AG04449 (cell line): ENCODE measurements at regions of chr10 and their contacts with region 1.

Region 1: DNA sequence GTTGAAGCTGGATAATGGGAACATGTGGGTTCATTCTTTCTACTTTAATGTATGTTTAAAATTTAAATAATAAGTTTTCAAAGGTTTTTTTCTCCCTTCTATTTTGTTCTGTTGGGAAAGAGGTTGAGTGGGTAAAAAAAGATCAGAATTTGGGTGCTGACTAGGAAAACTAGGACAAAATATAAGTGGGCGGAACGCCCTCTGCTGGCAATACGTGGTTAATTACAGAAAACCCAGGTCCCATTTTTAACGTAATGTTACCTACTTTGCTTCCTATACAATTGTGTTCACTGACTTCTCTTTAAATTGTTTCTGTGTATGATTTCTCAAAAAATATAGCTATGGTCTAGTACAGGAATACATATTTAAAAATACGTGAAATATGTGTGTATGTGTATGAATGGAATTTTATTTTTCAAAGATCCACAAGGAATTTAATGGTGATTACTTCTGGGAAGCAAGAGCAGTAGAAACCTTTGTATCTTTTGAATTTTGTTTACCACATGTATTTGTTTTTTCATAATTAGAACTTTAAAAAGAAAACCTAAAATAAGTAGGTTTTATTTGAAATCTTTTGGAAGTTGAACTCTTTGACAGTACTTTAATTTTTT is 8.7 kb downstream of the ECD start:
- DNase-seq: no peak
- H3K4me3 ChIP-seq: no peak overlapping the region
- CTCF ChIP-seq: peak; percentile 50

Region 2: GRCh38 chr10:72364239-72364777 is 794.8 kb before region 1 on chr10:
- CTCF ChIA-PET with region 1: interaction called, 14 read pairs
- POLR2A ChIA-PET with region 1: no interaction called
- DNase-seq: peak; percentile 80
- H3K4me3 ChIP-seq: peak overlapping the region; percentile 12; the same call in 1 of the 2 replicates
- CTCF ChIP-seq: peak; percentile 92

Region 3: GRCh38 chr10:72875250-72876055 is 283.7 kb before region 1 on chr10:
- CTCF ChIA-PET with region 1: no interaction called
- POLR2A ChIA-PET with region 1: no interaction called
- DNase-seq: no peak
- H3K4me3 ChIP-seq: no peak overlapping the region
- CTCF ChIP-seq: peak; percentile 24

Region 4: DNA sequence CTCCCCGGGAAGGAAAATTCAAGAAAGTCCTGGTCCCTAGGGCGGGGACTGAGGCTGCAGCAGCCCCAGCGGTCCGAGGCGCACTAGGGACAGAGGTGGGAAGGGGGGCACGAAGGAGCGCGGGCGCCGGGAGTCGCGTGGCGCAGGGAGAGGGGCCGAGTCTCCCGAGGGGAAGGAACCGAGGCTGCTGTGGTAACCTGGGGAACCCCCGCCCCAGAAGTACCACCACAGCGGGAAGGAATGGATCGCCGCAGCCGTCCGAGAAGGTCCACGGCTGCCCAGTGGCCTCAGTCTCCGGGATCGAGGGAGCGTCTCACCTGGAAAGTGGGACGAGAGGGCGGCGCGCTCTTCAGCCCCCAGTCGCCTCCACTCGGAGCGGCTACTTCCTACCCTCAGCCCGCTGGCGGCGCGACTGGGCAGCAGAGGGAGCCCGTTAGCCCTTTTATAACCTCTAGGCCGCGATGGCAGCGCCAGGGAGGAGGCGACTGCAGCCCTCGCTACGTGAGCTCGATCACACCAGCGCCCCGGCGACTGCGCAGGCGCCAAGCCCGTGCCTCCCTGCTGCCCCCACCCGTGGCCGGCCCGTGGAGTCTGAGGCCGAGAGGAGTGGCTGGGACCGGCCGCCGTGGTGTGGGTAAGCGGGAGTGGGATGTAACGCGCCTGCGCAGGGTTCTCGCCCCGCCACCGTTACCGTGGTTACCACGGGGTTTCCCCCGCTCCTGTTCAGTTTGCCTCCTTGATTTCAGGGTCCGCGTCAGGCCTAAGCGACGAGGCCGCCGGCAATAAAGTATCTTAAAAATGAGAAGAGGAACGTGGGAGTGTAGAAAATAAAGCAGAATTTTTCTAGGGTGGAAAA is 62.5 kb before region 1 on chr10 and contains the start of gene P4HA1:
- CTCF ChIA-PET with region 1: interaction called, 27 read pairs
- POLR2A ChIA-PET with region 1: interaction called, 3 read pairs
- DNase-seq: peak; percentile 77
- H3K4me3 ChIP-seq: peak within 1 kb of the TSS; percentile 98
- CTCF ChIP-seq: peak; percentile 72

Region 5: GRCh38 chr10:73131301-73131700 is 27.8 kb before region 1 on chr10:
- CTCF ChIA-PET with region 1: interaction called, 48 read pairs
- POLR2A ChIA-PET with region 1: no interaction called
- DNase-seq: no peak
- H3K4me3 ChIP-seq: no peak overlapping the region
- CTCF ChIP-seq: no peak

Region 6: DNA sequence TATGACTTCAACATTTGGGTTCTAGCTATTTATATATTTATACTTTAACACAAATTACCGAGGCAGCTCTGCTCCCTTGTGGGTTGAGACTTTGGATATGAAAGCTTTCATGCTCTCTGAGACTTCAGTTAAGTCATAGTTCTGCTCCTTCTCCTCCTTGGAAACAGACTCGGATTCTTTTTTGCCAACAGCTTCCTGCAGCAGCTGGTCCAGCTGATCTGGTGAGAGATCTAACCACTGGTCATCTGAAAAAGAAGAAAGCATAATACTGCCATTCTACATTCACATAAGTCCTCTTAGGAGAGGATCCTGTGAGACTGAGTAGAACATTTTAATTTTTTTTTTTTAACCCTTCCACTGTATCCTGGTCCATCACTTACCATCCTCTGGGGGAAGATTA is 19.9 kb before region 1 on chr10:
- CTCF ChIA-PET with region 1: interaction called, 48 read pairs
- POLR2A ChIA-PET with region 1: no interaction called
- DNase-seq: no peak
- H3K4me3 ChIP-seq: no peak overlapping the region
- CTCF ChIP-seq: no peak

Region 7: DNA sequence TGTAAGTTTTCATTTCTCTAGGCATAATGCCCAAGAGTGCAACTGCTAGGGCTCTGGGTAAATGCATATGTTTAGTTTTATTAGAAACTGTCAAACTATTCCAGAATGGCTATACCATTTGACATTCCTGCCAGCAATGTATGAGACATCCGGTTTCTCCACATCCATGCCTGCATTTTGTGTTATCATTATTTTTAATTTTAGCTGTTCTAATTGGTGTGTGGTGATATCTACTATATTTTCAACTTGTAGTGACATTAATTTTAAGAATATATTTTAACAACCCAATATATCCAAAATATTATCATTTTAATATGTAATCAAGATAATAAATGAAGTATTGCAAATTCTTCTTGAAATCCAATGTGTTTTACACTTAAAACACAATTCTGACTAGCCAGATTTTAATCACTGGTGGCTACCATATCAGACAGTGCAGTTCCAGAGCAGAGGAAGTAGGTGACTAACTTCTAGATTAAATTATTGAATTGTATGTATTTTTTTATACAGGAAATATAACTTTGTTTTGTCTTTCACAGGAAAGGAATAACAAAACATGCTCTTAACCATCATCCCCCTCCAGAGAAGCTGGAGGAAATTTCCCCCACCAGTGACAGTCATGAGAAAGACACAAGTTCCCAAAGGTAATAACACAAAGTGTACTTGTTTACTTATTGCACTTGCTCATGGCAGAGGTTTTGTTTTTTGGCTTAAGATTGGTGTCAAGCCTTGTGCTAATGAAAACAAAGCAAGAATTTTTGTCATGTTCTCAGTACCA is 15.2 kb after region 1 on chr10:
- CTCF ChIA-PET with region 1: interaction called, 58 read pairs
- POLR2A ChIA-PET with region 1: no interaction called
- DNase-seq: no peak
- H3K4me3 ChIP-seq: no peak overlapping the region
- CTCF ChIP-seq: no peak

Region 8: GRCh38 chr10:73182568-73182967 is 23.4 kb after region 1 on chr10:
- CTCF ChIA-PET with region 1: interaction called, 13 read pairs
- POLR2A ChIA-PET with region 1: no interaction called
- DNase-seq: peak; percentile 31
- H3K4me3 ChIP-seq: no peak overlapping the region
- CTCF ChIP-seq: no peak